Mammary epithelial cell (primary cell): ENCODE measurements at regions of chr17 and their contacts with region 1.

Region 1: DNA sequence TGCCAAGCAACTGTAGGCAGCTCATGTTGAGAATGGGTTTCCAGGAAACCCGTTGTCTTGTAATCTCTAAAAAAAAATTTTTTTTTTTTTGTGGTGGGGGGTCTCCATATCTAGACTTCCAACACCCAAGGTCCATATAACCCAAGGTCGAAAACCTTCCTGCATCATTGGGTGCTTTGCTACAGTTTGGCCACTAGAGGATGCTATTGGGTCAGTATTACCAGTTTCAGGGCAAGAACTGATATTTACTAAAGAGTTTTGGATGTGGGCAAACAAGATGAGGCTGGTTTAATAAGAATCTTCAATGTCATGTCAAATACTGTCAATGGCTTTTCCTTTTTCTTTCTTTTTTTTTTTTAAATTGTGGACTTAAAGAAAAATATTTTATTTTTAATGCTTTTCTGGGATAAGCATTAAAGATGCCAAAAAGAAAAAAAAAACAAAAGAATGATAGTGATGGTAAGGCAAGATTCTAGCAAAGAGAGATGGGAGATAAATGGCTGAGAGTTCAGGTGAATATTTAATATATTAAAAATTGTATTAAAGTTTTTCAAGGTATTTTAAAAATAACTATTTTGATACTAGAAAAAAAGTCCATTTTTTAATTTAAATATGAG is 62.2 kb downstream of the DHRS7C start:
- DNase-seq: peak; percentile 41
- H3K4me3 ChIP-seq: no peak overlapping the region
- H3K27ac ChIP-seq: no peak overlapping the region
- H3K4me1 ChIP-seq: peaks cover 4% of the 10 kb centered on the region
- H3K27me3 ChIP-seq: no peaks in the 10 kb centered on the region
- CTCF ChIP-seq: peak; percentile 100

Region 2: DNA sequence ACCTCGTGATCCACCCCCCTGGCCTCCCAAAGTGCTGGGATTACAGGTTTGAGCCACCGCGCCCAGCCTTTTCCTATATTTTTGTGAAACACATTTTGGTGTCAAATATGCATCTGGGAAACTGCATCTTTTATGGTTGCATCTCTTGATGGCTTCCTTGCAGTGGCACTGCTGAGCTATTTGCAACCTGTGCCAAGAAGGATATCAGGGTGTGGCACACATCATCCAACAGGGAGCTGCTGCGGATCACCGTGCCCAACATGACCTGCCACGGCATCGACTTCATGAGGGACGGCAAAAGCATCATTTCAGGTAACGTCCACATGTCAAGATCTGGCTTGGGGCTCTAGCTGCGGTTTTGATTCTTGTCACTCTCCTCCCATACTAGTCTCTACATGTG is 100.6 kb before region 1 on chr17:
- CTCF ChIA-PET with region 1: interaction called, 9 read pairs
- dilution Hi-C with region 1: no loop called
- in situ Hi-C with region 1: no loop called
- intact Hi-C with region 1: loop called (anchors 1 kb)
- DNase-seq: peak; percentile 47
- H3K4me3 ChIP-seq: no peak overlapping the region
- H3K27ac ChIP-seq: no peak overlapping the region
- H3K4me1 ChIP-seq: no peaks in the 10 kb centered on the region
- H3K27me3 ChIP-seq: no peaks in the 10 kb centered on the region
- CTCF ChIP-seq: peak in 1 of 2 donors; percentile 50

Region 3: GRCh38 chr17:9668517-9668916 is 60.6 kb before region 1 on chr17:
- CTCF ChIA-PET with region 1: no interaction called
- dilution Hi-C with region 1: loop called (anchors 5 kb)
- in situ Hi-C with region 1: no loop called
- intact Hi-C with region 1: no loop called
- DNase-seq: peak; percentile 94
- H3K4me3 ChIP-seq: no peak overlapping the region
- H3K27ac ChIP-seq: peak overlapping the region; percentile 45
- H3K4me1 ChIP-seq: peaks cover 22% of the 10 kb centered on the region
- H3K27me3 ChIP-seq: no peaks in the 10 kb centered on the region
- CTCF ChIP-seq: no peak

Region 4: GRCh38 chr17:9750524-9750923 is 21.4 kb after region 1 on chr17:
- CTCF ChIA-PET with region 1: no interaction called
- dilution Hi-C with region 1: no loop called
- in situ Hi-C with region 1: no loop called
- intact Hi-C with region 1: loop called (anchors 1 kb)
- DNase-seq: no peak
- H3K4me3 ChIP-seq: no peak overlapping the region
- H3K27ac ChIP-seq: no peak overlapping the region
- H3K4me1 ChIP-seq: no peaks in the 10 kb centered on the region
- H3K27me3 ChIP-seq: no peaks in the 10 kb centered on the region
- CTCF ChIP-seq: no peak

Region 5: GRCh38 chr17:9924735-9925191 is 195.6 kb after region 1 on chr17:
- CTCF ChIA-PET with region 1: no interaction called
- dilution Hi-C with region 1: no loop called
- in situ Hi-C with region 1: no loop called
- intact Hi-C with region 1: loop called (anchors 1 kb)
- DNase-seq: peak; percentile 56
- H3K4me3 ChIP-seq: no peak overlapping the region
- H3K27ac ChIP-seq: no peak overlapping the region
- H3K4me1 ChIP-seq: no peaks in the 10 kb centered on the region
- H3K27me3 ChIP-seq: no peaks in the 10 kb centered on the region
- CTCF ChIP-seq: peak; percentile 77 to 85